ENCODE measurements at regions of chr2 and their contacts with region 1.

Region 1: DNA sequence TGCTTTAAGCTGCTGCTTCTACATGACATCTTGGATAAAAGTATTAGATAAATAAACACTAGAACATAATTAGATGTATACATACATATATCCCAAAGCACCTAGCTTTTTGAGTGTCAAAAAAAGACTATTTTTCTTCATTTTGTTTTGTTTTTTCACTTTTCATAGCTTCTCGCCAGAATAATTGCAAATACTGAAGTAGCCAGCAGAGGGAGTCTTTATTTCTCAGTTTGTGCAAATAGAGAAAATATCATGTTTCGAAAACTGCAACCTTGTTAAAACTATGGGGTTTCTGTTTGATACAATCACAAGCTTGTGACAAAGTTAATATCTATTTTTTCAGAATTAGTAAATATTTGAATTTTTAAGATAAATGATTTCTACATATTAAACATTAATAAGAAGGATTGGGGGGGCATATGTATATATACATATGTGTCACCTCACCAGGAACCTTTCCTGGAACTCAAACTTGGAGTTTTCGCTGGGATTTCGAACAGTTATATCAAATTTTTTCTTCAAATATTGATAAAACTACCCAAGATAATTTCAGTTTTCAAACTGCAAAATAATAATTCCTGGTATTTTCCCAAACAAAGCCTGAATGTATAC is 61.0 kb downstream of the GRB14 start:
- DNase-seq: no peak

Region 2: DNA sequence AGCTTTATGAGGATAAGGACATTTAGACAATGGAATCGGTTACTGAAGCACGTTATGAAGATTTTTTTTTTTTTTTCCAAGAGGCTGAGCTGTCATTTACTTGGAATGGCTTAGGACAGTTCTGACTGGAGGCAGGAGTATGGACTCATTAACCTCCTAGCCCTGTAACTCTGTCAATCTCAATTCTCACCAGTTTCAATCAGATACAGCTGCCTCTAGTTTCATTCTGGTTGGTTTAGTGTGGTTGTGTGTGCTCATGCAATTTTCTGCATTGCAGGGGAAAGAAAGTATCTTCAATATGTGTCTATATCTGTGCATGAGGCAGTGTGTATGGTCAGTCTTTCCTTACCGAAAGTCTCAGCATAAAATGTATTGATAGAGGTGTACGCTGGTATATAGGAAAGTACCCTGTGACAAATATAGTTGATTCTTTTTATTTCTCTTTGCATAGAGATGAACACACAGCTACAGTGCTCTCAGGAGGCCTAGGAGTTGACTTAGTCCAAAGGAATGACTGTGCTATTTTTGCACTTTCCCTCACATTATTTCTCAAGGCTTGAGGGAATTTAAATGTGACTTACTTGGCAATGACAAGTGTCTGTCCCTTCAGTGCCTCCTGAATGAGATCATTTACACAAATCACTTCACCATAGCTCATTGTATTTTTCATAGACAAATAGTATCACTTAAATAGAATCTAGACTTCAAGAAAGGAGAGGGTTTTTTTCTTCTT is 111.5 kb after region 1 on chr2:
- intact Hi-C with region 1: no loop called
- DNase-seq: no peak

Region 3: GRCh38 chr2:164717000-164717803 is 156.9 kb after region 1 on chr2:
- intact Hi-C with region 1: loop called (anchors 2 kb)
- DNase-seq: no peak

Measured in posterior cingulate gyrus (tissue), 11 donors.